CD4-positive, alpha-beta T cell (primary cell): ENCODE measurements at regions of chr19 and their contacts with region 1.

Region 1: DNA sequence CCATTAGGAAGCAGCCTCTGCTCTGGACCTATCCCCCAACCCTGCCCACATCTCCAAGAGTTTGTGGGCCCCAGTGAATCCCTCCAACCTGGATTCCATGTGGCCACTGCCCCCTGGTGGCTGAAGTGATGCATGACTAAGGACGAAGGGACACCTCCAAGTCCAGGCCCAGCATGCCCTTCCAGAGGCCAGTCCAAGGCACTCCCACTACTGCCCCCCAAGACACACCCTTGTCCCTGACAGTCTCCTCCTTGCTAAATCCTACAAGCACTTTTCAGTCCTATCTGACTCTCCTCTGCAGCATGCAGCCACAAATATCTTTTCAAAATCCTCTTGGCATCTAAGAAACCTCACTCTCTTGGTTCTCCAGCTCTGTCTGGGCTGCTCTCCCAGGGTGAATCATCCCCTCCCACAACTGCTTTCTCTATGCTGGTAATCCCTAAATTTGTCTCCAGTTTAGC is 33.0 kb downstream of the DEDD2 start:
- DNase-seq: peak; percentile 51 to 82 (median 62)
- ATAC-seq: peak; percentile 62
- H3K4me3 ChIP-seq: no peak overlapping the region
- H3K4me3 Mint-ChIP-seq: peak overlapping the region; percentile 6
- H3K27ac ChIP-seq: no peak overlapping the region
- H3K27ac Mint-ChIP-seq: no peak overlapping the region
- H3K4me1 ChIP-seq: peaks cover 56% of the 10 kb centered on the region
- H3K4me1 Mint-ChIP-seq: peaks cover 53% of the 10 kb centered on the region
- H3K27me3 ChIP-seq: peaks cover 6% of the 10 kb centered on the region in 2 experiments
- H3K27me3 Mint-ChIP-seq: peaks cover 9% of the 10 kb centered on the region
- CTCF ChIP-seq: peak; percentile 90

Region 2: DNA sequence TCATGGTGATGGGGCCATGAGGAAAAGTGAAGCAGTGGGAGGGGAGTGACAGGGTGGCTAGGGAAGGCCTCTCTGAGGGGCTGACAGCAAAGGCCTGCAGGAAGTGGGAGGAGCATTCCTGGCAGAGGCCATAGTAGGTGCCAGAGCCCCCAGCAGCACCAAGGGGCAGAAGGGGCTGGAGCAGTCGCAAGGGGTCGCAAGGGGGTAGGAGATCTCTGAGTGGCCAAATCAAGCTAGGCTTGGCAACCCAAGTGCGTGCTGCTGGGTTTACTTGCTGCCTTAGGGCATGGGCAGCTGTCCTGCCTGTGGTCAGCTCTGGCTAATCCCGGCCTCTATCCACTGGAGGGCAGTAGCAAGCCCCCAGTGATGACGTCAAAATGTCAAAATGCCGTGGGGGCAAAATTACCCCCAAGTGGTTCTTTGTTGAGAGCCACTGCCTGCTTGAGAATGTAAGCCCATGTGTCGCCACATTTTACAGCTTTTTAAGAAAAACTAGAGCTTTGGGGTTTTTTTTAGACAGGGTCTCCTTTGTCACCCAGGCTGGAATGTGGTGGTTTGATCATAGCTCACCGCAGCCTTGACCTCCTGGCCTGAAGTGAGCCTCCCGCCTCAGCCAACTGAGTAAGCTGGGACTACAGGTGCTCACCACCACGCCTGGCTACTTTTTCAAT is 862.7 kb before region 1 on chr19:
- CTCF ChIA-PET with region 1: no interaction called
- POLR2A ChIA-PET with region 1: no interaction called
- intact Hi-C with region 1: no loop called
- DNase-seq: peak in 2 of 14 experiments; percentile 35 to 55
- ATAC-seq: no peak
- H3K4me3 ChIP-seq: no peak overlapping the region
- H3K4me3 Mint-ChIP-seq: peak overlapping the region; percentile 31
- H3K27ac ChIP-seq: peak overlapping the region in 1 of 2 donors; percentile 4
- H3K27ac Mint-ChIP-seq: peak overlapping the region; percentile 94
- H3K4me1 ChIP-seq: peaks cover 49% of the 10 kb centered on the region
- H3K4me1 Mint-ChIP-seq: peaks cover 50% of the 10 kb centered on the region
- H3K27me3 ChIP-seq: no peaks in the 10 kb centered on the region
- H3K27me3 Mint-ChIP-seq: no peaks in the 10 kb centered on the region
- CTCF ChIP-seq: no peak

Region 3: DNA sequence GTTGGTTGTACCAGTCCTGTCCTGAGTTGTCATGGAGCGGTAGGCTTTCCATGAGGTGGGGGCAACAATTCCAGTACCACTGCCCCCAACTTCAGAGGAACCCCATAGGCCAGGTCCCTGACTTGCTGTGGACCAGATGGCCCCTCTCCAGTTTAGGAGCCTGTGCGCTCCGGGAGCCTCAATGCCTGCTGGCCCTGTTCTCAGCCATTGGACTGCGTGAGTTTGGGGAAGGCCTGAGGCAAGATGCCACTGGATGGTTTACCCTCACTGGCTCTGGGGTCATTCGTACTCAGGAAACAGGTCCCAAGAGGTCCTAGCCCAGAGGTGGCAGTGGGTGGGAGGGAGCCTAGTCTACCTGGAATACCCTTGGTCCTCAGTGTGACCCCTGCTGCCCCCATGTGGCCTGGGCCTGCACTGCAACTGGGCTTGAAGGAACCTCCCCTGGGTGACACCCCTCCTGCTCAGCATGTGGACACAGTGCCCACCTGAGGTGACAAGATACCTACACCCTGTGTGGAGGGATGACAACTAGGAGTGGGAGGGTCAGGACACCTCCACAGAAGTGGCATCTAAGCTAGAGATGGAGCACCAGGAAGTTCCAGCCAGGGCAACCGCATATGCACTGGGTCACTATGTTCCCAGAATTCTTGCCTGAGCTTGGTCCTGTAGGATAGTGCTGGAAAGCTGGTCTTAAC is 111.5 kb after region 1 on chr19:
- CTCF ChIA-PET with region 1: no interaction called
- POLR2A ChIA-PET with region 1: no interaction called
- intact Hi-C with region 1: loop called in 1 of 2 experiments (anchors 5 kb)
- DNase-seq: peak; percentile 85 to 95 (median 88)
- ATAC-seq: peak; percentile 95
- H3K4me3 ChIP-seq: no peak overlapping the region
- H3K4me3 Mint-ChIP-seq: peak overlapping the region; percentile 54
- H3K27ac ChIP-seq: no peak overlapping the region
- H3K27ac Mint-ChIP-seq: peak overlapping the region; percentile 28
- H3K4me1 ChIP-seq: peaks cover 24% of the 10 kb centered on the region
- H3K4me1 Mint-ChIP-seq: peaks cover 15% of the 10 kb centered on the region
- H3K27me3 ChIP-seq: no peaks in the 10 kb centered on the region
- H3K27me3 Mint-ChIP-seq: no peaks in the 10 kb centered on the region
- CTCF ChIP-seq: peak; percentile 98